ENCODE measurements at regions of chr2 and their contacts with region 1.

Region 1: GRCh38 chr2:203740780-203741281 is 34.4 kb downstream of the CD28 start:
- DNase-seq: peak; percentile 62
- H3K4me3 Mint-ChIP-seq: peak overlapping the region; percentile 62
- H3K27ac Mint-ChIP-seq: peak overlapping the region; percentile 99
- H3K4me1 Mint-ChIP-seq: peaks cover 81% of the 10 kb centered on the region
- H3K27me3 Mint-ChIP-seq: no peaks in the 10 kb centered on the region

Region 2: GRCh38 chr2:203718087-203718486 is 22.7 kb before region 1 on chr2:
- intact Hi-C with region 1: loop called (anchors 1 kb)
- DNase-seq: peak; percentile 66
- H3K4me3 Mint-ChIP-seq: peak overlapping the region; percentile 48
- H3K27ac Mint-ChIP-seq: peak overlapping the region; percentile 91
- H3K4me1 Mint-ChIP-seq: peaks cover 93% of the 10 kb centered on the region
- H3K27me3 Mint-ChIP-seq: no peaks in the 10 kb centered on the region

Region 3: GRCh38 chr2:203763938-203764664 is 23.3 kb after region 1 on chr2:
- intact Hi-C with region 1: loop called (anchors 1 kb)
- DNase-seq: no peak
- H3K4me3 Mint-ChIP-seq: no peak overlapping the region
- H3K27ac Mint-ChIP-seq: peak overlapping the region; percentile 86
- H3K4me1 Mint-ChIP-seq: peaks cover 51% of the 10 kb centered on the region
- H3K27me3 Mint-ChIP-seq: no peaks in the 10 kb centered on the region

Region 4: DNA sequence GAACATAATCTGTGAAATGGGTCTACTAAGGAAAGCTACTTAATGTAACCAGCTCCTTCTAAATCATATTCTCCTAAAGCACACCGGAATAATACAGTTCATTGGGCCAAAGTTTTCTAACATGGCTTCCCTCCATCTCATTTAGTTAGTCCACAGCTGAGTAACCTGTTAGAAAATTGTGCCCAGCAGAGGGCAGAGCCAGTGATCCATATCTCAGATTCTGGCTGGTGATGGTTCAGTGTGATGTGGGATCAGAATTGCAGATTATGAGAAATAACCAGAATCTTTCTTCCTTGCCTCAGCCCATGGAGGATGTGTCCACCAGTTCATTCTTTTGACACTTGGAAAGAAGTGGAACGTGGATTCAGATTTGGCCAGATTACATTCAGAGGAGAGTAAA is 117.3 kb after region 1 on chr2:
- intact Hi-C with region 1: loop called (anchors 2 kb)
- DNase-seq: no peak
- H3K4me3 Mint-ChIP-seq: no peak overlapping the region
- H3K27ac Mint-ChIP-seq: peak overlapping the region; percentile 67
- H3K4me1 Mint-ChIP-seq: peaks cover 83% of the 10 kb centered on the region
- H3K27me3 Mint-ChIP-seq: no peaks in the 10 kb centered on the region

Region 5: GRCh38 chr2:204005940-204006721 is 265.3 kb after region 1 on chr2:
- intact Hi-C with region 1: loop called (anchors 5 kb)
- DNase-seq: no peak
- H3K4me3 Mint-ChIP-seq: no peak overlapping the region
- H3K27ac Mint-ChIP-seq: peak overlapping the region; percentile 80
- H3K4me1 Mint-ChIP-seq: peaks cover 73% of the 10 kb centered on the region
- H3K27me3 Mint-ChIP-seq: peaks cover 2% of the 10 kb centered on the region

Region 6: GRCh38 chr2:204159526-204159925 is 418.7 kb after region 1 on chr2:
- intact Hi-C with region 1: no loop called
- DNase-seq: no peak
- H3K4me3 Mint-ChIP-seq: no peak overlapping the region
- H3K27ac Mint-ChIP-seq: no peak overlapping the region
- H3K4me1 Mint-ChIP-seq: no peaks in the 10 kb centered on the region
- H3K27me3 Mint-ChIP-seq: peaks cover 19% of the 10 kb centered on the region